CD4-positive, alpha-beta memory T cell (primary cell): ENCODE measurements at regions of chr12 and their contacts with region 1.

Region 1: GRCh38 chr12:108514973-108515814 is at the start of gene FICD:
- DNase-seq: peak; percentile 98 to 100 (median 99)
- H3K4me3 ChIP-seq: peak within 1 kb of the TSS; percentile 84 to 90
- H3K4me3 Mint-ChIP-seq: peak within 1 kb of the TSS; percentile 91 to 97 (median 94)
- H3K27ac ChIP-seq: peak within 1 kb of the TSS; percentile 86
- H3K27ac Mint-ChIP-seq: peak within 1 kb of the TSS; percentile 90 to 97 (median 95)
- H3K4me1 ChIP-seq: peaks cover 27% of the 10 kb centered on the region
- H3K4me1 Mint-ChIP-seq: peaks cover 16 to 42% (median 28%) of the 10 kb centered on the region in 4 donors
- H3K27me3 ChIP-seq: no peaks in the 10 kb centered on the region
- H3K27me3 Mint-ChIP-seq: peaks cover 1% of the 10 kb centered on the region in 2 donors
- total RNA-seq, gene FICD: 10.6 to 12.3 TPM

Region 2: DNA sequence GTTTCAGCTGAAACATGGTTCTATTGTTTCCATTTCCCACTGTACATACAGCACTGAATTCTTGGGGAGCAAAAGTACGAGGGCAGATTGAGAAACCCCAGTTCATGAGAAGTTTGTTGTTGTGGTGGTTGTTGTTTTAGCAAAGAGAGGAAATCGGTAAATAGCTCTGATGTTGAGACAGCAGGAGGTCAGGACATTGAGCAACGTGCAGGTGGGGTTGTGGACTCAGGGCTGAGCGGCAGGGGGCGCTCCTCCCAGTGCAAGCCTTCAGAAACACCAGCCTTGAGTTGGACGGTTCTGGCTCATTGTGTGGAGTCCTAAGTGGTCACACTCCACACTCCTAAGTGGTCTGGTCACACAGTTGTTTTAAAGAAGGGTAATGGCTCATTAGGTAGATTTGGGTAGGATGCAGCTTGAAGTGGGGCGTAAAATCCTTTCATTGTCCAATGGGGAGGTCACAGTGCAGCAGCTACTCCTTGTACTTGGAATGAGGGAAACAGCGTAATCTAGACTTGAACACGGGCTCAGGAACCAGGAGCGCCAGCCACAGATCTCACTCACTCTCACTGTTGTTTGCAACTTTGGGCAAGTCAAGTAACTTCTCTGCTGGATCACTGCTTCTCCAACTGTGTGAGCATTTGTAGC is 844.1 kb before region 1 on chr12:
- CTCF ChIA-PET with region 1: interaction called, 6 read pairs
- POLR2A ChIA-PET with region 1: no interaction called
- intact Hi-C with region 1: loop called (anchors 1 kb)
- DNase-seq: peak in 1 of 5 donors; percentile 8
- H3K4me3 ChIP-seq: no peak overlapping the region
- H3K4me3 Mint-ChIP-seq: no peak overlapping the region
- H3K27ac ChIP-seq: no peak overlapping the region
- H3K27ac Mint-ChIP-seq: no peak overlapping the region
- H3K4me1 ChIP-seq: no peaks in the 10 kb centered on the region
- H3K4me1 Mint-ChIP-seq: peaks cover 2 to 7% (median 3%) of the 10 kb centered on the region in 4 donors
- H3K27me3 ChIP-seq: no peaks in the 10 kb centered on the region
- H3K27me3 Mint-ChIP-seq: peaks cover 9 to 16% of the 10 kb centered on the region in 2 donors

Region 3: GRCh38 chr12:107685360-107686248 is 829.6 kb before region 1 on chr12 and contains the start of gene PWP1:
- CTCF ChIA-PET with region 1: interaction called, 4 read pairs
- POLR2A ChIA-PET with region 1: no interaction called
- intact Hi-C with region 1: loop called (anchors 1 kb)
- DNase-seq: peak; percentile 94 to 97 (median 95)
- H3K4me3 ChIP-seq: peak within 1 kb of the TSS; percentile 94 to 98
- H3K4me3 Mint-ChIP-seq: peak within 1 kb of the TSS; percentile 96 to 99 (median 97)
- H3K27ac ChIP-seq: peak within 1 kb of the TSS; percentile 78
- H3K27ac Mint-ChIP-seq: peak within 1 kb of the TSS; percentile 94 to 100 (median 98)
- H3K4me1 ChIP-seq: peaks cover 25% of the 10 kb centered on the region
- H3K4me1 Mint-ChIP-seq: peaks cover 14 to 37% (median 26%) of the 10 kb centered on the region in 4 donors
- H3K27me3 ChIP-seq: no peaks in the 10 kb centered on the region
- H3K27me3 Mint-ChIP-seq: no peaks in the 10 kb centered on the region
- total RNA-seq, gene PWP1: 24.3 to 25.6 TPM

Region 4: GRCh38 chr12:107992870-107993451 is 522.2 kb before region 1 on chr12:
- CTCF ChIA-PET with region 1: interaction called, 10 read pairs
- POLR2A ChIA-PET with region 1: no interaction called
- intact Hi-C with region 1: no loop called
- DNase-seq: no peak
- H3K4me3 ChIP-seq: no peak overlapping the region
- H3K4me3 Mint-ChIP-seq: no peak overlapping the region
- H3K27ac ChIP-seq: no peak overlapping the region
- H3K27ac Mint-ChIP-seq: no peak overlapping the region
- H3K4me1 ChIP-seq: no peaks in the 10 kb centered on the region
- H3K4me1 Mint-ChIP-seq: no peaks in the 10 kb centered on the region
- H3K27me3 ChIP-seq: no peaks in the 10 kb centered on the region
- H3K27me3 Mint-ChIP-seq: peaks cover 1 to 12% of the 10 kb centered on the region in 2 donors

Region 5: GRCh38 chr12:108633534-108634248 is 118.5 kb after region 1 on chr12 and contains the start of gene SELPLG:
- CTCF ChIA-PET with region 1: no interaction called
- POLR2A ChIA-PET with region 1: no interaction called
- intact Hi-C with region 1: loop called (anchors 2 kb)
- DNase-seq: peak; percentile 91 to 97 (median 94)
- H3K4me3 ChIP-seq: peak within 1 kb of the TSS; percentile 92 to 95
- H3K4me3 Mint-ChIP-seq: peak within 1 kb of the TSS; percentile 94 to 100 (median 99)
- H3K27ac ChIP-seq: peak within 1 kb of the TSS; percentile 92
- H3K27ac Mint-ChIP-seq: peak within 1 kb of the TSS; percentile 99 to 100 (median 100)
- H3K4me1 ChIP-seq: peaks cover 65% of the 10 kb centered on the region
- H3K4me1 Mint-ChIP-seq: peaks cover 40 to 84% (median 54%) of the 10 kb centered on the region in 4 donors
- H3K27me3 ChIP-seq: no peaks in the 10 kb centered on the region
- H3K27me3 Mint-ChIP-seq: no peaks in the 10 kb centered on the region
- total RNA-seq, gene SELPLG: 175 to 176 TPM

Region 6: DNA sequence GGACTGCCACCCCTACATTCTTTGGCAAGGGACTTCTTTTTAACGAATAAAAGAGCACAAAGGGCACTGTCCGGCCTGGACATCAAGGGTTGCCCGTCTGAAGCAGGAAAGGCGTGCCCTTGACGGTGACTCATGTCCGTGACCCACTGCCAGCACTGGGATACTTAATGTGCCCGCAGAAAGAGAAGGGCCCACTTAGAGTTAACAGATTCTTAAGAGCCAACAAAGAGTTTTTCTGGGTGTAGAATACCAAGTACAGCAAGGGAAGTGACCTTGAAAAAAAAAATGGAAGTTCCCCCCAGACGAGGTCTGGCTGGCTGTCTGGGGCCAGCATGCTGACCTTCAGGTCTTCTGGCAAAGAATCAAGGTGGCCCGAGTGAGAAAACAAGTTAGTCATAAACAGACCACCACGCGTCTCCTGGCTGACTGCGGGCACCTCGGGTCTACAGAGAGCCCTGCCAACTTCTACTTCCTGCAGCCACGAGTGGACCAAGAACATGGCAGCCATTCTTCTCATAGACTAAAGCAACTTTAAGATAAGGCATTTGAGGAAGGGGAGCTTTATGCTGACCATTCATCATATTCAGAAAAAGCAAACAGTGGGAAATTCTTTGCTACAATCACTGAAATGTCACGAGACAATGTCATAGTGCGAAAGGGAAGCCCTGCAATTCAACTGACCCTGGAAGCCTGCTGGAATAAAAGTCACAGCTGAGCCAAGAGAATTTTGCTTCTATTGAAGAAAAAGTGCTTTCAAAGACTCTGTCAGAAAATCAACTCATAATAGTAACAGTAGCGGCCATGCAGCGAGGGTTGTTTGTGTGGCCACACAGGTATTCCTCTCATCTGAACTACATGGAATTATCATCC is 129.0 kb after region 1 on chr12:
- CTCF ChIA-PET with region 1: no interaction called
- POLR2A ChIA-PET with region 1: no interaction called
- intact Hi-C with region 1: no loop called
- DNase-seq: no peak
- H3K4me3 ChIP-seq: no peak overlapping the region
- H3K4me3 Mint-ChIP-seq: no peak overlapping the region
- H3K27ac ChIP-seq: no peak overlapping the region
- H3K27ac Mint-ChIP-seq: peak overlapping the region in 2 of 7 donors; percentile 32 to 46
- H3K4me1 ChIP-seq: peaks cover 14% of the 10 kb centered on the region
- H3K4me1 Mint-ChIP-seq: peaks cover 18 to 44% (median 25%) of the 10 kb centered on the region in 4 donors
- H3K27me3 ChIP-seq: no peaks in the 10 kb centered on the region
- H3K27me3 Mint-ChIP-seq: no peaks in the 10 kb centered on the region

Region 7: DNA sequence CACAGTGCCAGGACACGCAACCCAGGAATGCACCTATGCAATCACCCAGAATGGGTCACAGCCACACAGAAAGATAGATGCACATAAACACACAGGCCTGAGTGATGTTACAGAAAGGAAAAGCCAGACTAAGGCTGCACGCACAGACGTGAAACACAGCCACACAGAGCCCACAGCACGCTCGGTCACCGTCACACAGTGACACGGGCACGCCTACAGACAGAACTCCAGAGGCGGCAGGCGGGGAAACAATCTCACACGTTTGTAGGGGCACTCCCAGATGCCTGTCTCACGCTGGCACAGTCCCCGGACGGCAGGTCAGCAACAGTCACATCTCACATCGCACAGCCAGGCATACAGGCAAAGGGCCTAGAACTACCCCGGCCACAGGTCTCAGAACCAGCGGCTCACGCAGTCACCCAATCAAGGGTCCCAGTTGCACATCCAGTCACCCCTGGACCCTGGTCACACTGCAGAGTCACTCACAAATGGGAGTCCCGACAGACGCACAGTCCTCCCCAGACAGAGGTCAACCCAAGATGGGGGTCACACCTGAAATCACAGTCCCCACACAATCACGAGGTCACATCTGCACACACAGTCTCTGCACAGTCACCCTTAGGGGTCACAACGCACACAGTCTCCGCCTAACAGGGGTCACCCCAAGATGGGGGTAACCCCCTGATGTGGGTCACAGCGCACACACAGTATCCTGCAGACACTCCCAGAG is 341.4 kb after region 1 on chr12:
- CTCF ChIA-PET with region 1: no interaction called
- POLR2A ChIA-PET with region 1: no interaction called
- intact Hi-C with region 1: loop called (anchors 2 kb)
- DNase-seq: peak; percentile 52 to 87 (median 59)
- H3K4me3 ChIP-seq: peak overlapping the region; percentile 54 to 74
- H3K4me3 Mint-ChIP-seq: peak overlapping the region; percentile 93 to 98 (median 96)
- H3K27ac ChIP-seq: peak overlapping the region; percentile 67
- H3K27ac Mint-ChIP-seq: peak overlapping the region; percentile 83 to 99 (median 96)
- H3K4me1 ChIP-seq: peaks cover 30% of the 10 kb centered on the region
- H3K4me1 Mint-ChIP-seq: peaks cover 30 to 45% (median 38%) of the 10 kb centered on the region in 4 donors
- H3K27me3 ChIP-seq: no peaks in the 10 kb centered on the region
- H3K27me3 Mint-ChIP-seq: no peaks in the 10 kb centered on the region

Region 8: GRCh38 chr12:109093022-109093918 is 578.1 kb after region 1 on chr12 and contains the start of gene ALKBH2:
- CTCF ChIA-PET with region 1: no interaction called
- POLR2A ChIA-PET with region 1: no interaction called
- intact Hi-C with region 1: loop called (anchors 2 kb)
- DNase-seq: peak; percentile 93 to 98 (median 95)
- H3K4me3 ChIP-seq: peak within 1 kb of the TSS; percentile 62 to 75
- H3K4me3 Mint-ChIP-seq: peak within 1 kb of the TSS; percentile 84 to 91 (median 86)
- H3K27ac ChIP-seq: peak within 1 kb of the TSS; percentile 60
- H3K27ac Mint-ChIP-seq: peak within 1 kb of the TSS; percentile 86 to 97 (median 95)
- H3K4me1 ChIP-seq: peaks cover 27% of the 10 kb centered on the region
- H3K4me1 Mint-ChIP-seq: peaks cover 21 to 56% (median 34%) of the 10 kb centered on the region in 4 donors
- H3K27me3 ChIP-seq: no peaks in the 10 kb centered on the region
- H3K27me3 Mint-ChIP-seq: no peaks in the 10 kb centered on the region
- total RNA-seq, gene ALKBH2: 12.9 to 14.4 TPM